A549 (cell line): ENCODE measurements at regions of chr19 and their contacts with region 1.

Region 1: DNA sequence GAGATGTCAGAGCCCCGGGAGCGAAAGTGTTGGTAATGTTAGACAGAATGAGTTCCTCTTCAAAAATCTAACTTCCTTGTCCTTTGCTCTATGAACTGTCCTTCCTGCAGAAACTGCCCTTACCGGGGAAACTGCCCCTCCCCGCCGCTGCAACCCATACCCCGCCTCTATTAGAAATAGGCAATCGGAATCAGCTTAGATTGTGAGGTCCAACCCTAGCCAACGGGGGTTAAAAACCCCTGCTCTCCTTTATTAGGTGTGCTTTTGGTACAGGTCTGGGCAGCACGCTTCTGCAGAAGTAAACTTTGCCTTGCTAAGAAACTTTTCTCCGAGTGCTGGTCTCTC is 11.5 kb upstream of the CAPNS1 start:
- DNase-seq: no peak
- ATAC-seq: peak; percentile 29 to 36; a peak in 5 of 6 replicates
- H3K4me3 ChIP-seq: peak overlapping the region; percentile 52
- H3K27ac ChIP-seq: peak overlapping the region; percentile 85 to 88
- H3K4me1 ChIP-seq: peaks cover 30% of the 10 kb centered on the region
- CTCF ChIP-seq: no peak
- EP300 ChIP-seq: no peak
- POLR2A ChIP-seq: no peak
- RAD21 ChIP-seq: no peak

Region 2: GRCh38 chr19:36054119-36054732 is 74.1 kb before region 1 on chr19 and contains the start of gene THAP8:
- CTCF ChIA-PET with region 1: interaction called, 39 read pairs
- POLR2A ChIA-PET with region 1: interaction called, 8 read pairs
- DNase-seq: peak; percentile 100
- ATAC-seq: peak; percentile 82 to 88
- H3K4me3 ChIP-seq: peak within 1 kb of the TSS; percentile 84
- H3K27ac ChIP-seq: peak within 1 kb of the TSS; percentile 89 to 93
- H3K4me1 ChIP-seq: peaks cover 22% of the 10 kb centered on the region
- CTCF ChIP-seq: peak; percentile 54
- EP300 ChIP-seq: no peak; a peak in 1 of 5 replicates
- POLR2A ChIP-seq: peak; percentile 93
- RAD21 ChIP-seq: peak in 1 of 2 experiments; percentile 17; a peak in 2 of 5 replicates
- polyA plus RNA-seq, gene THAP8: 3.1 and 3.2 TPM in 2 replicates

Region 3: GRCh38 chr19:36067681-36068080 is 60.7 kb before region 1 on chr19:
- CTCF ChIA-PET with region 1: interaction called, 13 read pairs
- POLR2A ChIA-PET with region 1: interaction called, 6 read pairs
- DNase-seq: no peak
- ATAC-seq: no peak
- H3K4me3 ChIP-seq: no peak overlapping the region
- H3K27ac ChIP-seq: no peak overlapping the region
- H3K4me1 ChIP-seq: peaks cover 13% of the 10 kb centered on the region
- CTCF ChIP-seq: no peak
- EP300 ChIP-seq: no peak
- POLR2A ChIP-seq: no peak
- RAD21 ChIP-seq: no peak

Region 4: DNA sequence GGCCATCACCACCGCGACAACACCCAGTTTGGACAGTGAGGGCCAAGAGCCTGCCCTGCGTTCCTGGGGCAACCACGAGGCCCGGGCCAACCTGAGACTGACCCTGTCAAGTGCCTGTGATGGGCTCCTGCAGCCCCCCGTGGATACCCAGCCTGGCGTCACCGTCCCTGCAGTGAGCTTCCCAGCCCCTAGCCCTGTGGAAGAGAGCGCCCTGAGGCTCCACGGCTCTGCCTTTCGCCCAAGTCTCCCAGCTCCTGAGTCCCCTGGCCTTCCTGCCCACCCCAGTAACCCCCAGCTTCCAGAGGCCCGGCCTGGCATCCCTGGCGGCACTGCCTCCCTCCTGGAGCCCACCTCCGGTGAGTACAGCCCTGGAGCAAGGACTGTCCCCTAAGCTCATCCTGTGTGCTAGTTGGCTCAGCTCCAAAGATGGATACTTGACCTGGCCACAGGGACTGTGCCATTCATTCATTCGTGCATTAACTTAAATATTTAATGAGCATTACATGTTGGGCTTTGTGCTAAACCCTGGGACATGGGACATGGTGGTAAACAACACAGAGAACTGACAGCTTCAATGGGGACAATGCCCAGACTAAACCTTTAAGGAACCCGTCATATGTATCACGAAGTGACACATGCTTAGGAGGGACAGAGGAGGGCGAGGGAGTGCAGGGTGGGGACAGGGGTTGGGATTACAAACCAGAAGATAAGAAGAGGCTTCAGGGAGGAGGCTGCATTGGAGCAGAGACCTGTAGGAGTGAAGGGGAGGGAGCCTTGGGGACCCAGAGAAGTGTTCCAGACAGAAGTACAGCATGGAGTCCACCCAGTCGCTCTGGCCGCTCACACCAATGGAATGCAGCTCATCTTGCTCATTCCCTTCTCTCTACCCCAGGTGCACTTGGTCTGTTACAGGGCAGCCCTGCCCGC is 24.5 kb before region 1 on chr19:
- CTCF ChIA-PET with region 1: interaction called, 38 read pairs
- POLR2A ChIA-PET with region 1: interaction called, 4 read pairs
- DNase-seq: peak in 1 of 2 experiments; percentile 38
- ATAC-seq: peak; percentile 3 to 7; a peak in 4 of 6 replicates
- H3K4me3 ChIP-seq: no peak overlapping the region
- H3K27ac ChIP-seq: no peak overlapping the region
- H3K4me1 ChIP-seq: peaks cover 5% of the 10 kb centered on the region; the same call in 2 of the 3 replicates
- CTCF ChIP-seq: no peak
- EP300 ChIP-seq: no peak
- POLR2A ChIP-seq: no peak
- RAD21 ChIP-seq: no peak

Region 5: DNA sequence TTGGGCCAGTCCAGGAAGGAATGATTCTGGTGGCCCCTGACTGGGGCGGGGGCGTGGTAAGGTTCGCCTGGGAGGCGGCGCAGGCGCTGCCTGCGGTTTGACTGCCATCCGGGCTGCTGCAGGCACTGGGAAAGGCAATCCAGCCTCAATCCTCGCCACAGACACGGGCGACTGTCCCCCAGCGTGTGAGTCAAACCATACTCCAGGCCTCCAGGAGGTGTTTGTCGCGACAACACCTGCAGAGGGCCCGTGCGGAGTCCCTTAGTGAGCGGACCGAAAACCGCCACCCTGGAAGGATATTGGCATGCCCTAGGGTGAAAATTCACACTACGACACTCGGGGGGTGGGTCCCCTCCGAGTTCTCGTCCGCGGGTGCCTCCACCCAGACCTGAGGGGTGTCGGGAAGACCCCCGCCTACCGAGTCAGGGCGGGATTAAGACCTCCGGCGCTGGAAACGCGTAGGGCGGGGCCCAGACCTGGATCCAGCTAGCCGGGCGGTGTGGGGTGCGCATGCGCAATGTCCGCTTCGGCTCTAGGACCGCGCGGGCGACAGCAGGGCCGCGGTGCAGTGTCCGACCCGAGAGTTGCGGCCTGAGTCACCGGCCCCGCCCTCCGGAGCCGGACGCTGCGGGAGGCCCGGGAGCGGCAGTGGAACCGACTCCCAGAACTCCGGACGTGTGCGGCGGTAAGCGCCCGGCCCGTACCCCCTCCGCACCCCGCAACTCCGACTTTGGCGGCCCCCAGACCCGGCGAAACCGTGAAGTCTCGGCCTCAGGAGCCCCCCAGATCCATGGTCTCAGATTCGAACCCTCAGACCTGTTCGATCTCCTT is 11.3 kb after region 1 on chr19 and contains the start of gene CAPNS1:
- CTCF ChIA-PET with region 1: interaction called, 81 read pairs
- POLR2A ChIA-PET with region 1: interaction called, 57 read pairs
- DNase-seq: peak; percentile 99
- ATAC-seq: peak; percentile 77 to 85
- H3K4me3 ChIP-seq: peak within 1 kb of the TSS; percentile 75
- H3K27ac ChIP-seq: peak within 1 kb of the TSS; percentile 93 to 95
- H3K4me1 ChIP-seq: peaks cover 37% of the 10 kb centered on the region
- CTCF ChIP-seq: peak; percentile 17; the same call in 1 of the 3 replicates
- EP300 ChIP-seq: no peak; a peak in 1 of 5 replicates
- POLR2A ChIP-seq: peak; percentile 83
- RAD21 ChIP-seq: peak in 1 of 2 experiments; percentile 7; a peak in 1 of 5 replicates
- polyA plus RNA-seq, gene CAPNS1: 1,014 and 1,236 TPM in 2 replicates

Region 6: DNA sequence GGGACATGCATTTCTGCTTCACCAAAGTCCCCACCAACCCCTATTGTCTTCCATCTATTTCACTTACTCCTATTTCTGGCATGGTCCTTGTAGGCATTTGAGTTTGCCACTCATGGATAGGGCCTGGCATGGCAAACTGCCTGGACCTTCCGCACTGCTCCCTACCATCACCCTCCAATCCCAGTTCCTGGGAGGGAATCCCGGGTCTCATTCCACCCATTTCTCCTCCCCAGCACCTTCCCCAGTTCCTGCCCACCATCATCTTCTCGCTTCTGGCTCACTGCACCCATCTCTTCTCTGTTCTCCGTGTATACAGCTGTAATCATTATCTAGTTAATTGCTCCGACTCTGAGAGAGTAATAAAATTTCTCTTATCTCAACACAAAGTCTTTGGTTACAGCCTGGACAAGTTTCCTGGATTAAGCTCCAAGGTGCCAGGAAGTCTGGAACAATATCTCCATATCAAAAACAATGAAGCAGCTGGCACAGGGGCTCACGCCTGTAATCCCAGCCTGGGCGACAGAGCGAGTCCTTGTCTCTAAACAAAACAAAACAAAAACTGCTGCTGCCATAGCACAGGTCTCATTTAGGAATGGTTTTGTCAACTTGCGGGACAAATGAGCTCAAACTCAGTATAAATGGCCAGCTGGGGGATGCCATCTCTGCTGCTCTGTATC is 40.9 kb after region 1 on chr19:
- CTCF ChIA-PET with region 1: interaction called, 398 read pairs
- POLR2A ChIA-PET with region 1: interaction called, 10 read pairs
- DNase-seq: no peak
- ATAC-seq: no peak
- H3K4me3 ChIP-seq: no peak overlapping the region
- H3K27ac ChIP-seq: no peak overlapping the region
- H3K4me1 ChIP-seq: 0 out of 3 replicates have a peak, but pooled peaks cover 3% of the 10 kb centered on the region
- CTCF ChIP-seq: no peak
- EP300 ChIP-seq: no peak
- POLR2A ChIP-seq: no peak
- RAD21 ChIP-seq: no peak

Region 7: GRCh38 chr19:36378625-36379509 is 250.5 kb after region 1 on chr19 and contains the start of gene ZFP14:
- CTCF ChIA-PET with region 1: interaction called, 11 read pairs
- POLR2A ChIA-PET with region 1: interaction called, 3 read pairs
- DNase-seq: peak; percentile 98 to 100
- ATAC-seq: peak; percentile 99
- H3K4me3 ChIP-seq: peak within 1 kb of the TSS; percentile 61
- H3K27ac ChIP-seq: peak within 1 kb of the TSS; percentile 73 to 85
- H3K4me1 ChIP-seq: peaks cover 5% of the 10 kb centered on the region; the same call in 2 of the 3 replicates
- CTCF ChIP-seq: peak; percentile 34
- EP300 ChIP-seq: no peak
- POLR2A ChIP-seq: peak; percentile 80
- RAD21 ChIP-seq: peak; percentile 61 to 71
- polyA plus RNA-seq, gene ZFP14: 5.8 and 7.1 TPM in 2 replicates